Naive thymus-derived CD4-positive, alpha-beta T cell (primary cell): ENCODE measurements at regions of chr6 and their contacts with region 1.

Region 1: DNA sequence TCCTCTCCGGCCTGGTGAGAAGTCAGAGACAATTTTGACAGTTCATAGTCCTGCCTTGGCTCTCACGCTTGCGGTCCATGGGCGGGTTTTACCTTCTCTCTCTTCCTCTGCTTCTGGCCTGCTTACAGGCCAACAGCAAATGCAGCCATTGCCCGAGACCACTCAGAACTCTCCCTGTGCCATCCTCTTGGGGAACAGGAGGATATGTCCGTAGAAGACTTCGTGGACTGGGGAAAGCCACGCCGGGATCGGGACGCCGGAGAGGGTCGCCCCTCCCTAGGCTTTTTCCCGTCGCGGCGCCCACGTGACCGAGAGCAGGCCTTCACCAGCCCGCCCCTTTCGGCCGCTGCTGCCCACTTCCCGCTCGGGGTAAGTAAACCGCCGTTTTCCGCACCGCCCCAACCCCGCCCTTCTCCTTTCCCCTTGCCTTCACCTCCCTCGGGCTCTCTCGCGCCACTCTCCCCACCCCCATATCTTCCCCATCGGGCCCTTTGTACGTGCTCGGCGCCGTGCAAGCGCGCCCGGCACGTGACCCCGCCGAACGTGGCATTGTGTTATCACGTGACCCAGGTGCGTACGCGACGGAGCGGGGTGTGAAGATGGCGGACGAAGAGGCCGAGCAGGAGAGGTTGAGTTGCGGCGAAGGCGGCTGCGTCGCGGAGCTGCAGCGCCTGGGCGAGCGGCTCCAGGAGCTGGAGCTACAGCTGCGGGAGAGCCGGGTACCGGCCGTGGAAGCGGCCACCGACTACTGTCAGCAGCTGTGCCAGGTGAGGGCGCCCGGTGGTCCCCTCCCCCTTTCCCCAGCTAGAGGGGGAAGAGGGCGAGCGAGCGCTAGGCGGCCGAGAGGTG is at the start of gene ZNF292:
- DNase-seq: peak; percentile 82 to 97 (median 94)
- ATAC-seq: peak; percentile 85
- H3K4me3 ChIP-seq: peak within 1 kb of the TSS; percentile 93
- H3K4me3 Mint-ChIP-seq: peak within 1 kb of the TSS; percentile 81 to 99 (median 94)
- H3K27ac ChIP-seq: peak within 1 kb of the TSS; percentile 83
- H3K27ac Mint-ChIP-seq: peak within 1 kb of the TSS; percentile 88 to 99 (median 94)
- H3K4me1 ChIP-seq: peaks cover 40 to 45% of the 10 kb centered on the region in 2 donors
- H3K4me1 Mint-ChIP-seq: peaks cover 34 to 69% (median 55%) of the 10 kb centered on the region in 7 donors
- H3K27me3 ChIP-seq: no peaks in the 10 kb centered on the region
- H3K27me3 Mint-ChIP-seq: peaks cover 0 to 2% (median 0%) of the 10 kb centered on the region in 5 donors
- total RNA-seq, gene ZNF292: 62.4 to 87.5 (median 74.3) TPM

Region 2: DNA sequence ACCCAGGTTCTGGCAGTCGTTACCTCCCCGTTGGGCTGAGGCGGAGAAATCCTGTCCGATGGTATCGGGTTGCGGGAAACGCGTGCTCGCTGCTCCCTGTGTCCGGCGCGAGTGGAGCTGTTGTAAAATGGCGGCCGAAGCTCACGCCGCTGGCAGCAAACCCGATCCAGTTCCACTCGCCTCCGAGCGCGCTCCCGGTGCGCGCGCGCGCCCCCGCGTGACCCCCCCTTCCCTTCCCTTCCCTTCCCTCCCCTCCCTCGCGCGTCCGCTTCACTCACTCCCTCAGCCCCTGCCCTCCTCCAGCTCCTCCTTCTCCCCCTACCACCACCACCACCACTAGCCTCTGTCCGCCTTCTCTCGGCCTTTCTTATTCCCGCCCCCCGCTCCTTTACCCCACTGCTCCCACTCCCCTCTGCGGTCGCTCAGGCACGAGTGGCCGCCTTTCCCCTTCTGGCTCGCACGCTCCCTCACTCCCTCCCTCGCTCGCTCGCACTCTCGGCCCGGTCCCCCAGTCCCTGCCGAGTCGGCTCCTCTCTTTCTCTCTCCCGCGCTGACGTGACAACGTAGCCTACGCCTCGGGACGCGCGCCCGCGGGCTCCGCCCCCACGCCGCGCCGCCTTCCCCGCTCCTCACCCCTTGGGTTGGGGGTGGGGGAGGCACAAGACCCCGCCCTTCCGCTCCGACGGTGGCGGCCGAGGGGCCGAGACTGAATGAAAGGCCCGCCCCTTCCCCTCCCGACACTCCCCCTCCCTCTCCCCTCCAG is 1512.3 kb before region 1 on chr6 and contains the start of gene SYNCRIP:
- CTCF ChIA-PET with region 1: no interaction called
- POLR2A ChIA-PET with region 1: interaction called, 3 read pairs
- intact Hi-C with region 1: loop called (anchors 1 to 10 kb)
- DNase-seq: peak; percentile 96 to 99 (median 99)
- ATAC-seq: peak; percentile 91
- H3K4me3 ChIP-seq: peak within 1 kb of the TSS; percentile 99
- H3K4me3 Mint-ChIP-seq: peak within 1 kb of the TSS; percentile 90 to 99 (median 96)
- H3K27ac ChIP-seq: peak within 1 kb of the TSS; percentile 99
- H3K27ac Mint-ChIP-seq: peak within 1 kb of the TSS; percentile 97 to 100 (median 99)
- H3K4me1 ChIP-seq: peaks cover 29 to 31% of the 10 kb centered on the region in 2 donors
- H3K4me1 Mint-ChIP-seq: peaks cover 40 to 52% (median 49%) of the 10 kb centered on the region in 7 donors
- H3K27me3 ChIP-seq: no peaks in the 10 kb centered on the region
- H3K27me3 Mint-ChIP-seq: peaks cover 0 to under 1% (median 0%) of the 10 kb centered on the region in 5 donors
- total RNA-seq, gene SYNCRIP: 69.8 to 131 (median 82.2) TPM

Region 3: GRCh38 chr6:86456821-86457220 is 698.4 kb before region 1 on chr6:
- CTCF ChIA-PET with region 1: no interaction called
- POLR2A ChIA-PET with region 1: no interaction called
- intact Hi-C with region 1: no loop called
- DNase-seq: no peak
- ATAC-seq: no peak
- H3K4me3 ChIP-seq: no peak overlapping the region
- H3K4me3 Mint-ChIP-seq: no peak overlapping the region
- H3K27ac ChIP-seq: no peak overlapping the region
- H3K27ac Mint-ChIP-seq: no peak overlapping the region
- H3K4me1 ChIP-seq: no peaks in the 10 kb centered on the region
- H3K4me1 Mint-ChIP-seq: no peaks in the 10 kb centered on the region
- H3K27me3 ChIP-seq: no peaks in the 10 kb centered on the region
- H3K27me3 Mint-ChIP-seq: no peaks in the 10 kb centered on the region

Region 4: GRCh38 chr6:86825436-86825835 is 329.8 kb before region 1 on chr6:
- CTCF ChIA-PET with region 1: no interaction called
- POLR2A ChIA-PET with region 1: no interaction called
- intact Hi-C with region 1: no loop called
- DNase-seq: no peak
- ATAC-seq: no peak
- H3K4me3 ChIP-seq: no peak overlapping the region
- H3K4me3 Mint-ChIP-seq: no peak overlapping the region
- H3K27ac ChIP-seq: no peak overlapping the region
- H3K27ac Mint-ChIP-seq: no peak overlapping the region
- H3K4me1 ChIP-seq: no peaks in the 10 kb centered on the region
- H3K4me1 Mint-ChIP-seq: no peaks in the 10 kb centered on the region
- H3K27me3 ChIP-seq: no peaks in the 10 kb centered on the region
- H3K27me3 Mint-ChIP-seq: peaks cover 0 to 6% (median 0%) of the 10 kb centered on the region in 5 donors

Region 5: DNA sequence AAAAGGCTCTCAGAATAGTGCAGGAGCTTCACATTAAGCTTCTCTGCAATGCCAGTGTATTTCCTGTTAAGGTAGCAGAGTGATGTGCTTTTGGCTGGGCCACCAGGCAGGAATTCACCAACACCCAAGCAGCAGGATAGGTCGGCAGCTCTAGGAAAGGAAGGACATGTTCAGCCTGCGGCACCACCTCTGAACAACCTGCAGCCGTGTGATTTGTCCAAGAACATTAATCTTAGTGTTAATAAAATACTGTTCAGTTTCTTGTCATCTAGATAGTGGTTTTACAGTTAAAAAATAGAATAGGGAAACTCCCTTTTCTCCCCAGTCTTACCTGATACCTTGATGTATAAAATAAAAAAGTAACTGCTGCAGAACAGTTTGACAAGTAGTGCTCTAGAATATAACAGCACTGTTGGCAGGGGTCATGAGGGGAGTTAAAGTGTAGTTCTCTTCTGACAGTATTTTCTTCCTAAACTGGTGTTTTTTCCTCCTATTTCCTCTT is 18.9 kb after region 1 on chr6:
- CTCF ChIA-PET with region 1: no interaction called
- POLR2A ChIA-PET with region 1: no interaction called
- intact Hi-C with region 1: loop called in 1 of 2 experiments (anchors 2 kb)
- DNase-seq: peak in 1 of 9 donors; percentile 8
- ATAC-seq: peak; percentile 52
- H3K4me3 ChIP-seq: no peak overlapping the region
- H3K4me3 Mint-ChIP-seq: peak overlapping the region in 8 of 10 donors; percentile 4 to 65 (median 36)
- H3K27ac ChIP-seq: no peak overlapping the region
- H3K27ac Mint-ChIP-seq: peak overlapping the region in 7 of 9 donors; percentile 33 to 60 (median 47)
- H3K4me1 ChIP-seq: peaks cover 6 to 26% of the 10 kb centered on the region in 2 donors
- H3K4me1 Mint-ChIP-seq: peaks cover 42 to 94% (median 90%) of the 10 kb centered on the region in 7 donors
- H3K27me3 ChIP-seq: no peaks in the 10 kb centered on the region
- H3K27me3 Mint-ChIP-seq: no peaks in the 10 kb centered on the region

Region 6: GRCh38 chr6:87322304-87323212 is 167.3 kb after region 1 on chr6 and contains the start of gene SMIM8:
- CTCF ChIA-PET with region 1: interaction called, 3 read pairs
- POLR2A ChIA-PET with region 1: no interaction called
- intact Hi-C with region 1: loop called (anchors 1 to 2 kb)
- DNase-seq: peak; percentile 67 to 94 (median 81)
- ATAC-seq: peak; percentile 100
- H3K4me3 ChIP-seq: peak within 1 kb of the TSS; percentile 82
- H3K4me3 Mint-ChIP-seq: peak within 1 kb of the TSS; percentile 94 to 99 (median 98)
- H3K27ac ChIP-seq: peak within 1 kb of the TSS; percentile 80
- H3K27ac Mint-ChIP-seq: peak within 1 kb of the TSS; percentile 77 to 95 (median 93)
- H3K4me1 ChIP-seq: no peaks in the 10 kb centered on the region
- H3K4me1 Mint-ChIP-seq: peaks cover 14 to 32% (median 26%) of the 10 kb centered on the region in 7 donors
- H3K27me3 ChIP-seq: no peaks in the 10 kb centered on the region
- H3K27me3 Mint-ChIP-seq: peaks cover 0 to 6% (median 5%) of the 10 kb centered on the region in 5 donors
- total RNA-seq, gene SMIM8: 7.3 to 15.7 (median 10.5) TPM

Region 7: GRCh38 chr6:87589693-87590549 is 434.7 kb after region 1 on chr6 and contains the starts of genes ORC3 and RARS2:
- CTCF ChIA-PET with region 1: no interaction called
- POLR2A ChIA-PET with region 1: interaction called, 4 read pairs
- intact Hi-C with region 1: loop called (anchors 1 kb)
- DNase-seq: peak; percentile 86 to 97 (median 92)
- ATAC-seq: peak; percentile 100
- H3K4me3 ChIP-seq: peak within 1 kb of the TSS; percentile 89
- H3K4me3 Mint-ChIP-seq: peak within 1 kb of the TSS; percentile 87 to 100 (median 96)
- H3K27ac ChIP-seq: peak within 1 kb of the TSS; percentile 92
- H3K27ac Mint-ChIP-seq: peak within 1 kb of the TSS; percentile 87 to 97 (median 95)
- H3K4me1 ChIP-seq: peaks cover 22 to 32% of the 10 kb centered on the region in 2 donors
- H3K4me1 Mint-ChIP-seq: peaks cover 49 to 81% (median 75%) of the 10 kb centered on the region in 7 donors
- H3K27me3 ChIP-seq: no peaks in the 10 kb centered on the region
- H3K27me3 Mint-ChIP-seq: no peaks in the 10 kb centered on the region
- total RNA-seq, gene ORC3: 17.7 to 29.8 (median 27.6) TPM
- total RNA-seq, gene RARS2: 21.0 to 40.0 (median 24.2) TPM